Ascending aorta (tissue), 2 donors: ENCODE measurements at regions of chr9 and their contacts with region 1.

Region 1: GRCh38 chr9:124716808-124717207 is 54.3 kb downstream of the NR6A1 start:
- DNase-seq: no peak
- H3K4me3 ChIP-seq: no peak overlapping the region
- H3K27ac ChIP-seq: no peak overlapping the region
- H3K4me1 ChIP-seq: no peaks in the 10 kb centered on the region
- H3K27me3 ChIP-seq: no peaks in the 10 kb centered on the region
- CTCF ChIP-seq: no peak

Region 2: DNA sequence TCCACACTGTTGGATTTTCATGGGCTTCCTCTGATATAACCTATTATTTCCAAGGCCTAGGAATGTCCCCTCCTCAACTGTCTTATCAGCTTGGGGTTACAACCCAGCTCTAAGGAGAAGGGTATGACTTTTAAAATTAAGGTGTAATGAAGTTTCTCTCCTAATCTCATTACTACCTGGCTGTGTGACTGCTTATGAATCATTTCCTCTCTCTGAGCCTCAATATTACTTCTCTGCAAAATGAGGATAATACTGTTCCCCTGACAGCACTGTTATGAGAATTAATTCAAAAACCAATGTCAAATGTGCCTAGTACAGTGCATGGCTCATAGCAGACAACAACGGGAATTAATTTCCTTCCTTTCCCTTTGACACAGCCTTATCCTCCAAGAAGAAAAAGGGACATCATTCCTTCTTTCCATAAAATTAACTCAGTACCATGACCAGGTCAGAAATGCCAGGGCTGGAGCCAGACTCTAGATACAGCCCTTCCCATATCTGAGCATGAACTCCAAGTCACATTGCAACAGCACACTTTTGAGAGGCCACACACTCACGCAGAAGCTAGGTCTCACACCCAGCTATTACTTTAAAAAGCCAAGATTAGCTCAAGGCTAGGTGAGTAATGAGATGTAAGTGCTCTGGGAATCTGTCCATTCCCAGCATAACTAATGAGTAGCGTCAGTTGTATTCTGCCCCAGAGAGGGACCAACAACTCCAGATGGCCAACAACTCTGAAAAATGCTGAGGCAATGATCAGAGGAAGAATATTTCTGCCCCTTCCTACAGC is 64.4 kb before region 1 on chr9:
- intact Hi-C with region 1: loop called (anchors 2 kb)
- DNase-seq: peak in 1 of 2 donors; percentile 64
- H3K4me3 ChIP-seq: no peak overlapping the region
- H3K27ac ChIP-seq: peak overlapping the region; percentile 34 to 42
- H3K4me1 ChIP-seq: no peaks in the 10 kb centered on the region
- H3K27me3 ChIP-seq: no peaks in the 10 kb centered on the region
- CTCF ChIP-seq: no peak

Region 3: GRCh38 chr9:124771021-124771866 is 54.4 kb after region 1 on chr9 and contains the start of gene NR6A1:
- intact Hi-C with region 1: no loop called
- DNase-seq: peak; percentile 70 to 96
- H3K4me3 ChIP-seq: peak within 1 kb of the TSS; percentile 71 to 95
- H3K27ac ChIP-seq: no peak within 1 kb of the TSS
- H3K4me1 ChIP-seq: peaks cover 0 to 20% of the 10 kb centered on the region in 2 donors
- H3K27me3 ChIP-seq: peaks cover 7% of the 10 kb centered on the region
- CTCF ChIP-seq: peak in 2 of 3 experiments; percentile 22 to 26
- total RNA-seq, gene NR6A1: 0.53 TPM